Right lobe of liver (tissue), 6 donors: ENCODE measurements at regions of chr17 and their contacts with region 1.

Region 1: DNA sequence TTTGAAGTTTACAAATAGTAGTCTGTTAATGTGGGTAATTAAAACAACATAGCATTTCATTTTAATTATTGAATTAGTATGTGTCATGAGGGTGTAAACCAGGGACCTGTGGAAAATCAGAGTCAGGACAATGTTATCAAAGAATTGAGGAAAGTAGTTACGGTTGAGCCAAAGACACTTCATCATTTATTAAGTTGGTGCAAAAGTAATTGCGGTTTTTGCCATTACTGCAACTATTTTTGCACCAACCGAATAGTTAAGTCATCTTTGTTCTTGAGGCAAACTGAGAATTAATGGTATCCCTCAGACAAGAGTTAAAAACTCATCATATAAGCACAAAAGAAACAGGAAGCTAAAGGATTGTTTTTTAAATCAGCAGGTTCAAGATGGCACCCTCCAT is 593.7 kb downstream of the KCNJ2 start:
- DNase-seq: no peak
- ATAC-seq: no peak
- H3K4me3 ChIP-seq: no peak overlapping the region
- H3K27ac ChIP-seq: no peak overlapping the region
- H3K4me1 ChIP-seq: no peaks in the 10 kb centered on the region
- H3K27me3 ChIP-seq: no peaks in the 10 kb centered on the region
- CTCF ChIP-seq: no peak
- POLR2A ChIP-seq: no peak

Region 2: DNA sequence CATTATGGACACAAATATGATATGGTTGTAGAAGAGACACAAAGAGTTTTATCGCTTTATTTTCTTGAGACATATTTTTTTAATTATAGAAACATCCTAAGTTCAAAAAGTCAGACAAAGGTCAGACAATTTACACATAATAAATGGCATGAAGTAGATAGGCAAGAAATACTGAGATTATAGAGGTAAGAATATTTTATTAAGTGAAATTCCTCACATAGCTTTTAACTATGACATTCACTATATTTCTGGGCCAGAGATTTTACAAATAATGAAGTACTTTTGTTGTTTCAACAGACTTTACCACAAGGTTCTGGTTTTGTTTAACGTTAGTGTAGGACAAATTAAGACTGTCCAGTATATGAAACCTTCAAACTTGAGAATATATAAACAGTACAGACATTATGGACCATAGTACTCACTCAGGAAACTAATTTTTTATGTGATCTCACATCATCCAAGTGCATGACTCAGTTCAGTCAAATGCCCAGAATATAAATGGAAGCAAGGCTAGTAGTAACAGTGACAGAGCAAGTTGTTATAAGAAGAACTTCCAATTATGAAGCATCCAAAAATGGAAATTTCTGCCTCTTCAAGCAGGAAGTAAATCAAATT is 198.9 kb before region 1 on chr17:
- intact Hi-C with region 1: no loop called
- DNase-seq: no peak
- ATAC-seq: no peak
- H3K4me3 ChIP-seq: no peak overlapping the region
- H3K27ac ChIP-seq: no peak overlapping the region
- H3K4me1 ChIP-seq: no peaks in the 10 kb centered on the region
- H3K27me3 ChIP-seq: no peaks in the 10 kb centered on the region
- CTCF ChIP-seq: no peak
- POLR2A ChIP-seq: no peak

Region 3: GRCh38 chr17:70618641-70619040 is 144.4 kb before region 1 on chr17:
- intact Hi-C with region 1: loop called in 1 of 2 experiments (anchors 5 kb)
- DNase-seq: no peak
- ATAC-seq: no peak
- H3K4me3 ChIP-seq: no peak overlapping the region
- H3K27ac ChIP-seq: no peak overlapping the region
- H3K4me1 ChIP-seq: no peaks in the 10 kb centered on the region
- H3K27me3 ChIP-seq: no peaks in the 10 kb centered on the region
- CTCF ChIP-seq: no peak
- POLR2A ChIP-seq: no peak